ENCODE measurements at regions of chr16 and their contacts with region 1.

Region 1: GRCh38 chr16:29862884-29863668 is at the start of gene CDIPT:
- DNase-seq: peak; percentile 96
- ATAC-seq: peak; percentile 99
- H3K4me3 Mint-ChIP-seq: peak within 1 kb of the TSS; percentile 90
- H3K27ac Mint-ChIP-seq: peak within 1 kb of the TSS; percentile 98
- H3K4me1 Mint-ChIP-seq: peaks cover 18% of the 10 kb centered on the region
- H3K27me3 Mint-ChIP-seq: no peaks in the 10 kb centered on the region
- total RNA-seq, gene CDIPT: 35.1 to 50.0 TPM

Region 2: GRCh38 chr16:29645694-29646187 is 217.3 kb before region 1 on chr16:
- CTCF ChIA-PET with region 1: no interaction called
- POLR2A ChIA-PET with region 1: no interaction called
- intact Hi-C with region 1: no loop called
- DNase-seq: no peak
- ATAC-seq: peak; percentile 72
- H3K4me3 Mint-ChIP-seq: no peak overlapping the region
- H3K27ac Mint-ChIP-seq: peak overlapping the region; percentile 48
- H3K4me1 Mint-ChIP-seq: peaks cover 32% of the 10 kb centered on the region
- H3K27me3 Mint-ChIP-seq: no peaks in the 10 kb centered on the region

Region 3: DNA sequence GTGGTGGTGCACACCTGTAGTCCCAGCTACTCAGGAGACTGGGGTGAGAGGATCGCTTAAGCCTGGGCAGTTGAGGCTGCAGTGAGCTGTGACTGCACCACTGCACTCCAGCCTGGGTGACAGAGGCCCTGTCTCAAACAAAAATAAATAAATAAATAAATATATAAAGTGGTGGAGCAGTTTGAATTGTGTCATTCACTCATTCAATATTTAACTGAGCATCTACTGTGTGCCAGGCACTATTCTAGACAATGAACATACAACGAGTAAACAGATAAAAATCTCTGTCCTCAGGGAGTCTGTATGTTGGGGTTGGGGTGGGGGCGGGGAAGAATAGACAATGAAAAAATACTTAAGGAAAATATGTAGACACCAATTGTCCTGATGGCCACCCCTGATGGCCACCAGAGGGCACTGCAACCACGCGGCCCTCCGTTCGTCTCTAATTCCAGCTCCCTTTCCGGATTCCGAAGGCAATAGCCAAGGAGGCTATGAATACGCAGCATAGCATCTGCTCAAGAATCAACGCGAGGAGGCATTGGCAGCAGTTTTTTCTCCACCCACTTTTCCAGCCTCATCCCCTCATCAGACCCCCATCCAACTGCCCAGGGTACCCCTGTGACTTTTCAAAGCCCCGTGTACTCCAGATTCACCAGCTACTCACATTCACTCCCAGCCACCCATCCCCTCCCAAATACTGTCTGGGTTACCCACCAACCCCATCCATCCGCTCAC is 162.7 kb before region 1 on chr16:
- CTCF ChIA-PET with region 1: interaction called, 12 read pairs
- POLR2A ChIA-PET with region 1: no interaction called
- intact Hi-C with region 1: loop called in 1 of 2 experiments (anchors 1 kb)
- DNase-seq: peak; percentile 88
- ATAC-seq: peak; percentile 45
- H3K4me3 Mint-ChIP-seq: peak overlapping the region; percentile 44
- H3K27ac Mint-ChIP-seq: peak overlapping the region; percentile 67
- H3K4me1 Mint-ChIP-seq: peaks cover 32% of the 10 kb centered on the region
- H3K27me3 Mint-ChIP-seq: no peaks in the 10 kb centered on the region

Region 4: DNA sequence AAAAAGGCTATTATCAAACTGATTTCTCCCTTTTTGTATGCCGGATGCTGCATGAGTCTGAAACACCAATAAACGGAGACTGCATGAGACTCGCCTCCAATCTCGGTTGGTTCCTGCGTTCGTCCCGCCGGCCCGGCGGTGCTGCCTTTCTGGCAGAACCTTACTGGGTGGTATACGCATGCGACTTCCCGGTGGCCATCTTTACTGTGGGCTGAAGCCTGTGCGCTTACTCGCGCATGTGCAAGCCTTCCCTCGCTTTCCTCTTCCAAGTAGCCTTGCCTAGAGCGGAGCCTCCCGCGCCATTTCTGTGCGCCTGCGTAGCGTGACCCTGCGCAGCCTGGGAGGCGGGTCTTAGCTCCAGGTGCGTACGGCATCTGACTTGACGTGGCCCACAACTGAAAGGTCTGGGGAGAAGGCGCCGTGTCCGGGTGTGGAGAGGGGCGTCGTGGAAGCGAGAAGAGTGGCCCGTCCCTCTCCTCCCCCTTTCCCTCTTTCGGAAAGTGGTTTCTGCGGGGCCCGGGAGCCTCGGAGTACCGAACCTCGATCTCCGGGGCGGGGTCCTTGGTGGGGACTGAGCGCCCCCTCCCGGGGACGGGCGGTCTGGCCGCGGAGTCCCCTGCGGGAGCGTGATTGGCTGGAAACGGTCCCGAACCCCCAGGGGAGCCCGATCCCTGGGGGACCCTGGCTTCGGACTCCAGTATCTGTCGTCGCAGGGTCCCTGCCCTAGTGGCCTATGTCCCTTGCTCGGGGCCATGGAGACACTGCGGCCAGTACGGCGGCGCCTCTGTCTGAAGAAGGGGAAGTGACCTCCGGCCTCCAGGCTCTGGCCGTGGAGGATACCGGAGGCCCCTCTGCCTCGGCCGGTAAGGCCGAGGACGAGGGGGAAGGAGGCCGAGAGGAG is 47.0 kb before region 1 on chr16 and contains the start of gene PAGR1:
- CTCF ChIA-PET with region 1: no interaction called
- POLR2A ChIA-PET with region 1: no interaction called
- intact Hi-C with region 1: loop called (anchors 1 to 2 kb)
- DNase-seq: peak; percentile 99
- ATAC-seq: peak; percentile 72
- H3K4me3 Mint-ChIP-seq: peak within 1 kb of the TSS; percentile 84
- H3K27ac Mint-ChIP-seq: peak within 1 kb of the TSS; percentile 97
- H3K4me1 Mint-ChIP-seq: peaks cover 57% of the 10 kb centered on the region
- H3K27me3 Mint-ChIP-seq: no peaks in the 10 kb centered on the region
- total RNA-seq, gene PAGR1: 20.6 to 25.6 TPM

Region 5: DNA sequence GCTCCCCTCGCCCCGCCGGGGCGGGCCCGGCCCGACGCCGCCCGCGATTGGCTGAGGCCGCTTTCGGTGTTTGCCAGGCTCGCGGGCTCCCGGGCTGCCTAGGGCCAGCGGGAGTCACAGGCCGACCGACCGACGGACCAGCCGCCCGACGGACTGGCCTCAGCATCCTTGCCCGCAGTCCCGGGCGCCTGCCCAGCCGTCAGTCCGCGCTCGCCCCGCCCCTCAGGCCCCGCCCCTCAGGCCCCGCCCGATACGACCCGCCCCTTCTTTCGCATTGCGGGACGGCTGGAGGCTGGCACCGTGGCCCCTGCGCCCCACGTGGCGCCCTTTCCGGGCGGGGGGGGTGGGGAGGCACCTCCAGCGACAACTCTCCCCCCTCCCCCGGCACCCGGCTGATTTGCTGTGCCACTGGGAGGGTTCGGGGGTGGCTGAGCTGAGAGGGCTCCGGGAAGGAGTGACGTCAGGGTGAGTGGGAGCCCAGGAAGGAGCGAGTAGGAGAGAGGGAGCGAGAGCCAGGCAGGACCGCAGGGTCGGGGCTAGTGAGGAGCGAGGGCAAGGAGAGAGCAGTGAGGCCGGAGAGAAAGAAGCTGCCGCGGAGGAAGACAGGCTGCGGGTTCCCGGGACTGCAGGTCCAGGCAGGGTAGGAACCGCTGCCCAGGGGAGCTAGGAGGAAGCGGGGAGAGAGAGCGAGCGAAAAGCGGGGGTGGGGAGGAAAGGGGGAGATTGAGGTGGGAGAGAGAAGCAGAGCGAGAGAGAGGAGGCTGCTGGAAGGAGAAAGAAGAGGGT is 37.2 kb after region 1 on chr16 and contains the start of gene ASPHD1:
- CTCF ChIA-PET with region 1: interaction called, 3 read pairs
- POLR2A ChIA-PET with region 1: no interaction called
- intact Hi-C with region 1: loop called in 1 of 2 experiments (anchors 1 kb)
- DNase-seq: peak; percentile 84
- ATAC-seq: peak; percentile 92
- H3K4me3 Mint-ChIP-seq: peak within 1 kb of the TSS; percentile 74
- H3K27ac Mint-ChIP-seq: peak within 1 kb of the TSS; percentile 38
- H3K4me1 Mint-ChIP-seq: peaks cover 13% of the 10 kb centered on the region
- H3K27me3 Mint-ChIP-seq: peaks cover 21% of the 10 kb centered on the region
- total RNA-seq, gene ASPHD1: 2.7 to 3.2 TPM

Region 6: DNA sequence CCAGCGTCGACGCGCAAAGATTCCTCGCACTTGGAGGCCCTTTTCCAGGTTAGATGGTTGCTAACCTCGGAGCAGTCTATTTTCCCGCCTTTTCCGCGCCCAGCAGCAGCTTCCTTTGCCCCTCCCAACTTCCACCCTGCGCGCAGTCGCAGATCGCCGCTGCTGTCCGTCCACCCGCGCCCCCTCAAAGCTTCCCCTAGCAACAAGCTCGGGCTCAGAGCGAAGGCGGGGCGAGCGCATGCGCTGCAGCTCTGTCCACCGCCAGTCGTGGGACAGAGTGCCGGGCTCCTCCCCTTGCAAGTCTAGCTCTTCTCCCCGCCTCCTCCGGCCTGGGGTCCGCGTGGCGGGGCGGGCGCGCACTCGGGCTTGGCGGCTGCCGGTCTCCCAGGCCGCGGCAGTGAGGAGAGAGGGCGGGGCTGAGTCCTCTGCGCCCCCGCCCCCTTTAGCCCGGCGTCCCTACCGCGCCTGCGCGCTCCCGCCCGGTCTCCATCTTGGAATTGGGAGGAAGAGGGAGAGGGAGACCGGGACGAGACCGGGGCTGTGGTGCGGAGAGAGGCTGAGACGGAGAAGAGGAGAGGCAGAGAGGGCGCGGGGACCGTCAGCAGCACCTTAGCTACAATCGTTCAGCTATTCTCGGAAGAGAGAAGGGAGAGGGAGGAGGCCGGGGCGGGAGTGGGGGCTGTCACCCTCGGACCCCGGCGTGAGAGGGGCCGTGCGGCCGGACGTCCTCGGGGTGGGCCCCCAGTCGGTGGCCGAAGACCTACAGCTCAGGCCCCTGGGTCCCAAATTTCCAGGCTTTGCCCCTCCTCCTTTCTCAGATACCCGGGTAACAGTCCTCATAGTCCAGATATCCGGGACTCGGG is 110.5 kb after region 1 on chr16 and contains the start of gene TAOK2:
- CTCF ChIA-PET with region 1: interaction called, 3 read pairs
- POLR2A ChIA-PET with region 1: no interaction called
- intact Hi-C with region 1: loop called in 1 of 2 experiments (anchors 1 kb)
- DNase-seq: peak; percentile 98
- ATAC-seq: peak; percentile 98
- H3K4me3 Mint-ChIP-seq: peak within 1 kb of the TSS; percentile 87
- H3K27ac Mint-ChIP-seq: peak within 1 kb of the TSS; percentile 86
- H3K4me1 Mint-ChIP-seq: peaks cover 31% of the 10 kb centered on the region
- H3K27me3 Mint-ChIP-seq: no peaks in the 10 kb centered on the region
- total RNA-seq, gene TAOK2: 24.1 to 24.4 TPM

Region 7: GRCh38 chr16:30032083-30032819 is 169.2 kb after region 1 on chr16:
- CTCF ChIA-PET with region 1: no interaction called
- POLR2A ChIA-PET with region 1: no interaction called
- intact Hi-C with region 1: loop called (anchors 1 to 10 kb)
- DNase-seq: peak; percentile 80
- ATAC-seq: peak; percentile 62
- H3K4me3 Mint-ChIP-seq: peak overlapping the region; percentile 8
- H3K27ac Mint-ChIP-seq: no peak overlapping the region
- H3K4me1 Mint-ChIP-seq: peaks cover 8% of the 10 kb centered on the region
- H3K27me3 Mint-ChIP-seq: peaks cover 38% of the 10 kb centered on the region